ENCODE measurements at regions of chr17 and their contacts with region 1.

Region 1: GRCh38 chr17:65588176-65588808 is 26.8 kb upstream of the AXIN2 start:
- DNase-seq: peak; percentile 68
- ATAC-seq: peak; percentile 91
- H3K4me3 ChIP-seq: no peak overlapping the region
- H3K27ac ChIP-seq: peak overlapping the region; percentile 17; the same call in 1 of the 2 replicates
- H3K4me1 ChIP-seq: peaks cover 26 to 39% of the 10 kb centered on the region in 2 experiments
- H3K27me3 ChIP-seq: no peaks in the 10 kb centered on the region
- CTCF ChIP-seq: peak; percentile 7 to 71 (median 67); a peak in 5 of 6 replicates
- POLR2A ChIP-seq: no peak
- RAD21 ChIP-seq: peak; percentile 39; the same call in 1 of the 2 replicates

Region 2: GRCh38 chr17:65785109-65785508 is 196.8 kb after region 1 on chr17:
- CTCF ChIA-PET with region 1: no interaction called
- POLR2A ChIA-PET with region 1: no interaction called
- RAD21 ChIA-PET with region 1: no interaction called
- intact Hi-C with region 1: loop called (anchors 10 kb)
- DNase-seq: peak; percentile 66
- ATAC-seq: peak; percentile 40; the same call in 1 of the 2 replicates
- H3K4me3 ChIP-seq: peak overlapping the region in 1 of 2 experiments; percentile 30; a peak in 2 of 4 replicates
- H3K27ac ChIP-seq: peak overlapping the region; percentile 58
- H3K4me1 ChIP-seq: peaks cover 39 to 40% of the 10 kb centered on the region in 2 experiments
- H3K27me3 ChIP-seq: no peaks in the 10 kb centered on the region
- CTCF ChIP-seq: no peak
- POLR2A ChIP-seq: no peak
- RAD21 ChIP-seq: no peak

Measured in HCT116 (cell line).